GM12878 (cell line): ENCODE measurements at regions of chr7 and their contacts with region 1.

Region 1: GRCh38 chr7:142626420-142627035 is 122.7 kb upstream of the PRSS1 start:
- DNase-seq: no peak
- ATAC-seq: peak; percentile 96
- H3K4me3 ChIP-seq: no peak overlapping the region
- H3K27ac ChIP-seq: no peak overlapping the region
- H3K4me1 ChIP-seq: no peaks in the 10 kb centered on the region
- H3K27me3 ChIP-seq: peaks cover 0 to 3% of the 10 kb centered on the region in 2 experiments; a peak in 1 of 4 replicates
- CTCF ChIP-seq: peak; percentile 56 to 79 (median 69)
- EP300 ChIP-seq: no peak
- POLR2A ChIP-seq: no peak
- RAD21 ChIP-seq: peak; percentile 37

Region 2: DNA sequence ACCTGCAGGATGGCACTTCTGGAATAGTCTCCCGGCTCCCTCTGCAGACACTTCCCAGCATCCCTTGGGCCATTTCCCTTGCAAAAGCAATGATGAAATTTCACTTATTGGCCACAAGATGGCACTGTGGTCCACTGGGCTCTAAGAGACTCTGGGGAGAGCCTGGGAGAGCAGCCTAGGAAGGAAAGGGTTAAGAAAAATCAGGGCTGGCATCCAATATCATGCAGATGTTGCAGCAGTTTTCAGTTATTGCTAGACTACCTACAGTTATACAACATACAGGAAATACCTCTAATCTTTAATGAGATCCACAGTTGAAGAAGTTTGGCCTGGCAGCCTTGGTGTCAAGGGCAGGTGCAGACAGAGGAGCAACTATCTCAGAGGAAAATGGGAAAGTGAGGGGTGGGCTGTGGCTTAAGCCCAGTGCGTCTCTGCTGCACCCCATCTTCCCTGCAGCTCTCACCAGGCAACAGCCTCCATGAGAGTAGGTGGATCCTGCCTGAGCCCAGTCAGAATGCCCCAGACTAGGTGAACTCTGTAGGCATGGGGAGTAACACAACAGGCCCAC is 268.5 kb before region 1 on chr7:
- CTCF ChIA-PET with region 1: no interaction called
- POLR2A ChIA-PET with region 1: no interaction called
- RAD21 ChIA-PET with region 1: no interaction called
- SMC1A ChIA-PET with region 1: no interaction called
- in situ Hi-C with region 1: no loop called
- intact Hi-C with region 1: no loop called
- DNase-seq: peak; percentile 5
- ATAC-seq: peak; percentile 97
- H3K4me3 ChIP-seq: no peak overlapping the region
- H3K27ac ChIP-seq: no peak overlapping the region
- H3K4me1 ChIP-seq: no peaks in the 10 kb centered on the region
- H3K27me3 ChIP-seq: no peaks in the 10 kb centered on the region; a peak in 2 of 4 replicates
- CTCF ChIP-seq: peak; percentile 55 to 80 (median 77)
- EP300 ChIP-seq: no peak
- POLR2A ChIP-seq: no peak
- RAD21 ChIP-seq: peak; percentile 55

Region 3: DNA sequence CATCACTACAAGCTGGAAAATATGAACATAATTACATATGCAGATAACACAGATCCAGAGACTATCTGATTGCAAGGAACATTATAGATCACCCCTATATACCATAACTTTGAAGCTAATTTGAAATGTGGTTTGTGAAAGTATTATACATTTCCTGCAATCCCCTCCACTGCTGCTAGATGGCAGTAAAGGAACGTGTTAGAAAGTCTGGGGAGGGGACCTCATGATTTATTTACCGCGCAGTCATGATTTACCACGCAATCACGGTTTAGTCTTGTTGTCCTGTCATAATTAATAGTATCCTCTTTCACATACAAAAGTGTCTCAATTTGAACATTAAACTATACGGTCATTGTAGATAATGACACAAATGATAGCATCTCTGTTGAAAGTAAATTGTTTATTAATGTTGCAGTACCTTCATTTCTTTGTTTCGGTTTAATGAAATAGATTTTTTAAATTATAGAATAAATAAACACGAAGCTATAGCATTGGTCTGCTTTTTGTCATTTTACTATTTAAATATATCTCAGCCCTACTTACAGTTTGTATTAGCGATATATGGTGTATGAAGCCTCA is 22.6 kb before region 1 on chr7:
- CTCF ChIA-PET with region 1: interaction called, 23 read pairs
- POLR2A ChIA-PET with region 1: no interaction called
- RAD21 ChIA-PET with region 1: interaction called, 5 read pairs
- SMC1A ChIA-PET with region 1: interaction called, 8 read pairs
- in situ Hi-C with region 1: no loop called
- intact Hi-C with region 1: no loop called
- DNase-seq: no peak
- ATAC-seq: peak; percentile 74
- H3K4me3 ChIP-seq: no peak overlapping the region
- H3K27ac ChIP-seq: no peak overlapping the region
- H3K4me1 ChIP-seq: no peaks in the 10 kb centered on the region
- H3K27me3 ChIP-seq: no peaks in the 10 kb centered on the region
- CTCF ChIP-seq: peak; percentile 74 to 81 (median 81)
- EP300 ChIP-seq: no peak
- POLR2A ChIP-seq: no peak
- RAD21 ChIP-seq: peak; percentile 82